Activated CD8-positive, alpha-beta memory T cell treated with anti-CD3 and anti-CD28 coated beads, Interleukin-2, amount 10 ng/mL, durations not matched to agents 7 days and 5 days (primary cell): ENCODE measurements at regions of chr12 and their contacts with region 1.

Region 1: DNA sequence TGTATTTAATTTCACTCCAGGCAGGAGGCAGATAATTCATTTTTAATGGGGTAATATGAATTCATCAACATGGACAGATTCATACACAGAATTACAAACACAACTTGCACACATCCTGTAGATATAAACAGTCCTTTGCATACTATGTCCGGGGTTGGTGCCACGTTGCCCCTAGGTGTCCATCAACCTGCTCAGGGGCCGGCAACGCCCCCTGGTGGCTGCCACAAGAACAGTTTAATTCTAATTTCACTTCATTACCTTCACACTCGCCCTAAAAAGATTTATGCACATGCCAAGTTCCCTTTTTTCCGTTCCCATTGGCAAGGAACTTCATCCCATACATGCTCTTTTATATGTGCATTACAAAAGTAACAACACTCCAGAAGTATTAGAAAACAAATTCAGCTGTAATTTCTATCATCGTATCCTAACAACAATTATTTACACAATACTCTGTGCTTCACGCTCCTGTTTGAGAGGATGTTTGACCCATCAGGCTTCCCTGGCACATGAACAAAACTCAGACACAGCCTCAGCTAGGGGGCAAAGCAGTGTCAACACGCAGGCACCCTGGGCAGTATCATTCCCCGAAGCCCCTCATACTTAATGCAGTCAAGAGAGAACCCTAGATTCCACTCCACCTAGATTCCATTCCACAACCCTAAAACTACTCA is 15.5 kb downstream of the MANSC1 start:
- DNase-seq: peak; percentile 77
- ATAC-seq: peak; percentile 90
- H3K4me3 Mint-ChIP-seq: no peak overlapping the region
- H3K27ac Mint-ChIP-seq: no peak overlapping the region
- H3K4me1 Mint-ChIP-seq: peaks cover 21% of the 10 kb centered on the region
- H3K27me3 Mint-ChIP-seq: peaks cover 30% of the 10 kb centered on the region

Region 2: GRCh38 chr12:12054993-12055392 is 279.5 kb before region 1 on chr12:
- CTCF ChIA-PET with region 1: no interaction called
- DNase-seq: no peak
- ATAC-seq: no peak
- H3K4me3 Mint-ChIP-seq: no peak overlapping the region
- H3K27ac Mint-ChIP-seq: no peak overlapping the region
- H3K4me1 Mint-ChIP-seq: no peaks in the 10 kb centered on the region
- H3K27me3 Mint-ChIP-seq: peaks cover 26% of the 10 kb centered on the region

Region 3: GRCh38 chr12:12070674-12071656 is 263.5 kb before region 1 on chr12 and contains the start of gene BCL2L14:
- CTCF ChIA-PET with region 1: interaction called, 12 read pairs
- DNase-seq: peak; percentile 53
- ATAC-seq: peak; percentile 80
- H3K4me3 Mint-ChIP-seq: peak within 1 kb of the TSS; percentile 89
- H3K27ac Mint-ChIP-seq: peak within 1 kb of the TSS; percentile 91
- H3K4me1 Mint-ChIP-seq: peaks cover 33% of the 10 kb centered on the region
- H3K27me3 Mint-ChIP-seq: peaks cover 15% of the 10 kb centered on the region
- total RNA-seq, gene BCL2L14: 3.3 to 12.2 TPM

Region 4: DNA sequence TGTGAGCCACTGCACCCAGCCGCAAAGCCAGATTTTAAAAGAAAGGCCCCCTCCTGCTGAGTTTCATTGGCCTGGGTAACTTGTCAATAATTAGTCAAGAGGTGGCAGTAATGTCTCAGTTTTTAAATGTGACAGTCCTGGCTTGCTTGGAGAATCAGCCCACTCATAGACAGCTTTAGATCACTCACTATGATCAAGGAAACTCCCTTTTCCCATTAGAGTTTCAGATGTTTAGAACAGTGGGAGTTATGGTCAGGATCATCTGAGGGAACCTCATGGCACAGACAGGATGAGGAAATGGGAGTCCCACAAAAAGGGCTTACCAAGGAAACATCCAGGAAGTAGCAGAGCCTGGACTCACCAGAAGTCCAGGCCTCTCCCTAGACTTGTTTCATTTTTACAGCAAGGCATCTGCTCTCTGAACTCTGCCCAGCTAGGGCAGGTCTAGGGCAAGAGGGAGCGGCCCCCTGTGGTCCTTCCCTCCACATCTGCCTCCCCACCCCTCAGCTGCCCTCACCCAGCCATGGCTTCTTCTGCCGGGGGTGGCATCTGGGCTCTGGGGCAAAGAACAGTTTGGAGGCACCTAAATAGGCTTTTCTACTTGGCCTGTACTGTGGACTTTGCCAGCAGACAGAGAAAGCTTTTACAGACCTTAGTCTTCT is 252.5 kb before region 1 on chr12:
- CTCF ChIA-PET with region 1: interaction called, 11 read pairs
- DNase-seq: no peak
- ATAC-seq: peak; percentile 65
- H3K4me3 Mint-ChIP-seq: no peak overlapping the region
- H3K27ac Mint-ChIP-seq: no peak overlapping the region
- H3K4me1 Mint-ChIP-seq: peaks cover 1% of the 10 kb centered on the region
- H3K27me3 Mint-ChIP-seq: no peaks in the 10 kb centered on the region

Region 5: DNA sequence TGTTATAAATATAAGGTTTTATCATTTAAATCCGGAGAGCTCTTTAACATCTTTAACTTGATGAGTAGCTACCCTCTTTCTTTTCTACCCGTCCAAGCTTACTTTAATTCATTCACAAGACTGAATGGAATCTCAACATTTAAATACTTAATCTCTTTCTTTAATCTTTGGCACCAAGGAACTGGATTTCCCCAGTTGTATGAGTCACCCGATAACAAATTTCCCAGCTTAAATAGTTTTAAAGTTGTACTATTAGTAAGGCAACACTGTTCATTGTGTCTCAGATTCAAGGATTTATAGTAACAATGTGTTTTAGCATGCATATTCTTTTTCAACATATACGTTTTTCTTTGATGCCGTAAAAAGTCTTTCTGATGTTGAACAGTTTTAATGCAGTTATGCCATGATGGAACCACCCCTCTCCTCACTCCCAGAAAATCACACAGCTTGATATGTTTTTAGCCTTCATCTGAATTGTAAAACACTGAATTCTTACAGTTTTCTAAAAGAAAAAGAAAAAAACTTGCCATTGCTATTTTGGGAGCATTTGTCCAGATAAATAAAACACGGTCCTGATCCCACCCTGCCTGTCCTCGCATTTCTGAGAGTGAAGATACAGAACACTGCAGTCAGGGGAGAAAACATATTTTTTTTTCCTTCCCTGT is 51.6 kb before region 1 on chr12:
- CTCF ChIA-PET with region 1: no interaction called
- DNase-seq: no peak
- ATAC-seq: no peak
- H3K4me3 Mint-ChIP-seq: no peak overlapping the region
- H3K27ac Mint-ChIP-seq: no peak overlapping the region
- H3K4me1 Mint-ChIP-seq: no peaks in the 10 kb centered on the region
- H3K27me3 Mint-ChIP-seq: peaks cover 44% of the 10 kb centered on the region

Region 6: GRCh38 chr12:12349711-12350665 is 15.5 kb after region 1 on chr12 and contains the start of gene MANSC1:
- CTCF ChIA-PET with region 1: interaction called, 12 read pairs
- DNase-seq: peak; percentile 71
- ATAC-seq: peak; percentile 78
- H3K4me3 Mint-ChIP-seq: peak within 1 kb of the TSS; percentile 65
- H3K27ac Mint-ChIP-seq: peak within 1 kb of the TSS; percentile 48
- H3K4me1 Mint-ChIP-seq: peaks cover 18% of the 10 kb centered on the region
- H3K27me3 Mint-ChIP-seq: peaks cover 19% of the 10 kb centered on the region
- total RNA-seq, gene MANSC1: 0.14 TPM in 1 of 2 experiments, not detected in the other